Caco-2 (cell line): ENCODE measurements at regions of chr9 and their contacts with region 1.

Region 1: GRCh38 chr9:98118640-98119601 is at the start of gene TRIM14:
- DNase-seq: peak; percentile 84
- H3K4me3 ChIP-seq: peak within 1 kb of the TSS; percentile 84
- H3K4me3 Mint-ChIP-seq: peak within 1 kb of the TSS; percentile 87
- H3K27ac Mint-ChIP-seq: peak within 1 kb of the TSS; percentile 71
- H3K4me1 ChIP-seq: peaks cover 26% of the 10 kb centered on the region
- H3K4me1 Mint-ChIP-seq: peaks cover 29% of the 10 kb centered on the region
- H3K27me3 ChIP-seq: no peaks in the 10 kb centered on the region
- H3K27me3 Mint-ChIP-seq: no peaks in the 10 kb centered on the region
- CTCF ChIP-seq: peak in 1 of 2 experiments; percentile 55
- total RNA-seq, gene TRIM14: 30.3 and 34.5 TPM in 2 replicates

Region 2: GRCh38 chr9:98062151-98062550 is 56.8 kb before region 1 on chr9:
- CTCF ChIA-PET with region 1: no interaction called
- POLR2A ChIA-PET with region 1: no interaction called
- intact Hi-C with region 1: no loop called
- DNase-seq: no peak
- H3K4me3 ChIP-seq: no peak overlapping the region
- H3K4me3 Mint-ChIP-seq: no peak overlapping the region
- H3K27ac Mint-ChIP-seq: no peak overlapping the region
- H3K4me1 ChIP-seq: peaks cover 7% of the 10 kb centered on the region
- H3K4me1 Mint-ChIP-seq: no peaks in the 10 kb centered on the region
- H3K27me3 ChIP-seq: no peaks in the 10 kb centered on the region
- H3K27me3 Mint-ChIP-seq: no peaks in the 10 kb centered on the region
- CTCF ChIP-seq: no peak

Region 3: GRCh38 chr9:98074115-98074990 is 44.6 kb before region 1 on chr9:
- CTCF ChIA-PET with region 1: interaction called, 10 read pairs
- POLR2A ChIA-PET with region 1: no interaction called
- intact Hi-C with region 1: loop called (anchors 1 kb)
- DNase-seq: peak; percentile 71 to 80
- H3K4me3 ChIP-seq: no peak overlapping the region
- H3K4me3 Mint-ChIP-seq: no peak overlapping the region
- H3K27ac Mint-ChIP-seq: peak overlapping the region; percentile 27
- H3K4me1 ChIP-seq: peaks cover 16% of the 10 kb centered on the region
- H3K4me1 Mint-ChIP-seq: peaks cover 12% of the 10 kb centered on the region
- H3K27me3 ChIP-seq: no peaks in the 10 kb centered on the region
- H3K27me3 Mint-ChIP-seq: no peaks in the 10 kb centered on the region
- CTCF ChIP-seq: peak; percentile 90 to 96

Region 4: GRCh38 chr9:98099898-98100297 is 19.0 kb before region 1 on chr9:
- CTCF ChIA-PET with region 1: no interaction called
- POLR2A ChIA-PET with region 1: no interaction called
- intact Hi-C with region 1: loop called (anchors 1 kb)
- DNase-seq: no peak
- H3K4me3 ChIP-seq: no peak overlapping the region
- H3K4me3 Mint-ChIP-seq: no peak overlapping the region
- H3K27ac Mint-ChIP-seq: no peak overlapping the region
- H3K4me1 ChIP-seq: peaks cover 30% of the 10 kb centered on the region
- H3K4me1 Mint-ChIP-seq: peaks cover 25% of the 10 kb centered on the region
- H3K27me3 ChIP-seq: no peaks in the 10 kb centered on the region
- H3K27me3 Mint-ChIP-seq: no peaks in the 10 kb centered on the region
- CTCF ChIP-seq: no peak

Region 5: GRCh38 chr9:98146101-98146991 is 27.4 kb after region 1 on chr9:
- CTCF ChIA-PET with region 1: interaction called, 3 read pairs
- POLR2A ChIA-PET with region 1: no interaction called
- intact Hi-C with region 1: loop called (anchors 1 kb)
- DNase-seq: peak; percentile 86 to 92
- H3K4me3 ChIP-seq: no peak overlapping the region
- H3K4me3 Mint-ChIP-seq: peak overlapping the region; percentile 25
- H3K27ac Mint-ChIP-seq: peak overlapping the region; percentile 78
- H3K4me1 ChIP-seq: peaks cover 40% of the 10 kb centered on the region
- H3K4me1 Mint-ChIP-seq: peaks cover 25% of the 10 kb centered on the region
- H3K27me3 ChIP-seq: no peaks in the 10 kb centered on the region
- H3K27me3 Mint-ChIP-seq: no peaks in the 10 kb centered on the region
- CTCF ChIP-seq: no peak

Region 6: GRCh38 chr9:98176391-98177259 is 57.7 kb after region 1 on chr9:
- CTCF ChIA-PET with region 1: interaction called, 7 read pairs
- POLR2A ChIA-PET with region 1: interaction called, 10 read pairs
- intact Hi-C with region 1: loop called (anchors 2 kb)
- DNase-seq: peak; percentile 62 to 65
- H3K4me3 ChIP-seq: no peak overlapping the region
- H3K4me3 Mint-ChIP-seq: peak overlapping the region; percentile 64
- H3K27ac Mint-ChIP-seq: peak overlapping the region; percentile 91
- H3K4me1 ChIP-seq: peaks cover 60% of the 10 kb centered on the region
- H3K4me1 Mint-ChIP-seq: peaks cover 45% of the 10 kb centered on the region
- H3K27me3 ChIP-seq: no peaks in the 10 kb centered on the region
- H3K27me3 Mint-ChIP-seq: no peaks in the 10 kb centered on the region
- CTCF ChIP-seq: no peak

Region 7: GRCh38 chr9:98192503-98193335 is 73.8 kb after region 1 on chr9 and contains the start of gene CORO2A:
- CTCF ChIA-PET with region 1: interaction called, 10 read pairs
- POLR2A ChIA-PET with region 1: interaction called, 8 read pairs
- intact Hi-C with region 1: loop called (anchors 1 kb)
- DNase-seq: peak; percentile 88 to 93
- H3K4me3 ChIP-seq: peak within 1 kb of the TSS; percentile 69
- H3K4me3 Mint-ChIP-seq: peak within 1 kb of the TSS; percentile 81
- H3K27ac Mint-ChIP-seq: peak within 1 kb of the TSS; percentile 67
- H3K4me1 ChIP-seq: peaks cover 25% of the 10 kb centered on the region
- H3K4me1 Mint-ChIP-seq: peaks cover 28% of the 10 kb centered on the region
- H3K27me3 ChIP-seq: no peaks in the 10 kb centered on the region
- H3K27me3 Mint-ChIP-seq: no peaks in the 10 kb centered on the region
- CTCF ChIP-seq: peak; percentile 10 to 76
- total RNA-seq, gene CORO2A: 18.9 and 20.0 TPM in 2 replicates

Region 8: DNA sequence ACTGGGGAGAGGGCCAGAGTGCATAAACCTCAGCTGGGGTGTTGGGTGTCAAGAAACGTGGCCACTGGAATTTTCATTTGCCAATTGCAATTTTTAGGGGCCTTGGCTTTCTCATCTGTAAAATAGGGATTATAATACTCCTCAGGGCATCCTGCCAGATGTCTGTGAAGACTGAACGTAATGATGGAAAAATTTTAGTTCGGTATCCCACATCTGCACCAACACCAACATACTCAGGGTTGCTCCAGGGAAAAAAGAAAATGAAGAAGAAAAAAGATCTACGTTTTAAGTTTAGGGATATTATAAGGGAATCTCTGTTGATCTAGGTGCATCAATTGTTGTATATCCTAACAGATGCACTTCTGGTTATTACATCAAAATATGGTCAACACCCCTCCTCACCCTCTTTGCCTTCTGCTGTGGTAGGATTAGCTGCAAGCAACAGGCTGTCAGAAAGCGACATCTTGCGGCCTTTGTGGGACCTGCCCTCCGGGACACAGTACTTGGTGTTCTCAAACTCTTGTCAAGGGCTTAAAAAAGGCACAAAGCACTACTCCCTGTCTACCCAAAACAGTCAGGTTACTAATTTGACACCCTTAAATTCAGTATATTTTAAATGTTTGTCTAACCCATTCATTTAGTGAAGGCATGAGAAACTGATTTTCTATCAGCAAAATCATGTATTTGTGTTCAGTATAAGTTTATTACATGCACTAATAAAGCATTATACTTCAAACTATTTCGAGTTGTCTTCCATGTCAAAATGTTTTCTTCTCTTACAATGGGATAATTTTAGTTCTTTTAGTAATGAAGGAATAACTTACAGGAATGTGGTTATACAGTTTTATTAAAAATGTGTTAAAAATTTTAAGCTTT is 144.8 kb after region 1 on chr9:
- CTCF ChIA-PET with region 1: interaction called, 6 read pairs
- POLR2A ChIA-PET with region 1: no interaction called
- intact Hi-C with region 1: loop called (anchors 1 kb)
- DNase-seq: peak; percentile 85
- H3K4me3 ChIP-seq: no peak overlapping the region
- H3K4me3 Mint-ChIP-seq: no peak overlapping the region
- H3K27ac Mint-ChIP-seq: no peak overlapping the region
- H3K4me1 ChIP-seq: no peaks in the 10 kb centered on the region
- H3K4me1 Mint-ChIP-seq: peaks cover 17% of the 10 kb centered on the region
- H3K27me3 ChIP-seq: no peaks in the 10 kb centered on the region
- H3K27me3 Mint-ChIP-seq: no peaks in the 10 kb centered on the region
- CTCF ChIP-seq: peak; percentile 94 to 96